BJ (cell line): ENCODE measurements at regions of chr3 and their contacts with region 1.

Region 1: DNA sequence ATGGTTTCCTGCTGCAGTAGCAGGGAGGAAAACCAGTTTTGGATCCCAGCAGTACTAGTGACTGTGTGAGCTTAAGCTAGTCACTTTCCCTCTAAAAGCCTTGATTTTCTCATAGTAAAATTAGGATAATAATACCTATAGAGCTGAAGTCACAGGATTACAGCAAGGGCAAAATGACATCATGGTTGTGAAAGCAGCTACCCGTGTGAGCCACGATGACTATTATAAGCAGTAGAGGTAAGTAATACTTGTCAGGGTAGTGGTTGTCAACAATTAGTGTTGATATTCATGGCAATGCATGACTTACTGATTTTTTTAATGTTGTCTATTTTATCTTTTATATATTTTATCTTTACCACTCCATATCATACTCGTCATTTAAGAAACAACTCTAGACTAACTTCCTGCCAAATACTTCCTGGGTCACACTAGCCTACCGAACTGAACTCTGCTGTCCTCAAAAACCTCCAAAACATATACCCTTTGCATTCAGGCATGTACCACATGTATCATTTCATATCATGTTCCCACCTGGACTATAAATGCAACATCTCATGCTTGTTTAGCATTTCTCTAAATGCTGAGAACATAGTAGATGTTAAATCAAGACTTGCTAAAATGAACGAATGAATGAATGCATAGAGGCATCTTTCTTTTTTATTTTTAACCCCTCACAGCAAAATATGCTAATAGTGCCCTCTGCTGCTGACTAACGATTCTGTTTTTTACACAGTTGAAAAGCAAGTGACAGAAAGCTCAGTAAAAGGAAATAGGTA is 172.6 kb downstream of the P3H2 start:
- DNase-seq: no peak
- H3K4me3 ChIP-seq: no peak overlapping the region
- H3K27me3 ChIP-seq: peaks cover 20% of the 10 kb centered on the region
- CTCF ChIP-seq: peak; percentile 59

Region 2: GRCh38 chr3:189270248-189270832 is 677.8 kb before region 1 on chr3:
- CTCF ChIA-PET with region 1: interaction called, 47 read pairs
- POLR2A ChIA-PET with region 1: no interaction called
- DNase-seq: no peak
- H3K4me3 ChIP-seq: no peak overlapping the region
- H3K27me3 ChIP-seq: peaks cover 1% of the 10 kb centered on the region; the same call in 1 of the 2 replicates
- CTCF ChIP-seq: peak; percentile 77

Region 3: GRCh38 chr3:189652042-189652441 is 296.1 kb before region 1 on chr3:
- CTCF ChIA-PET with region 1: interaction called, 25 read pairs
- POLR2A ChIA-PET with region 1: no interaction called
- DNase-seq: no peak
- H3K4me3 ChIP-seq: no peak overlapping the region
- H3K27me3 ChIP-seq: no peaks in the 10 kb centered on the region
- CTCF ChIP-seq: peak; percentile 52

Region 4: GRCh38 chr3:189937307-189938124 is 10.6 kb before region 1 on chr3:
- CTCF ChIA-PET with region 1: interaction called, 22 read pairs
- POLR2A ChIA-PET with region 1: no interaction called
- DNase-seq: peak; percentile 98
- H3K4me3 ChIP-seq: no peak overlapping the region
- H3K27me3 ChIP-seq: peaks cover 2% of the 10 kb centered on the region
- CTCF ChIP-seq: no peak